ENCODE measurements at regions of chr2 and their contacts with region 1.

Region 1: DNA sequence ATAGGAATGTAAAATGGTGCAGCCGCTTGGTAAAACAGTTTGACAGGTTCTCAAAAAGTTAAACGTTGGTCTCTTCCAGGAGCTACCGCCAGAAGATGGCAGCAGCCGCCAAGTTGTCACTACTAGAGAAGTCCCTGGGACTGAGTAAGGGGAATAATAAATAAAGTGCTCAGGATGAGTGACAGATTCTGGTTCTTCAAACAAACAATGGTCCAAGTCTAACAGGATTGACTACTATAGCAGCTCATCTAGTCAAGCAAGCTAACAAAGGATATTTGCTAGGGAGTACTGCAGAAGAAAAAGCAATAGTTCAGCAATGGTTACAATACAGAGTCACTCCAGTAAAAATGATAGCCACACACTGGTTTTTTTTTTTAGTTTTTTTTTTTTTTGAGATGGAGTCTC is 3.8 kb upstream of the ANAPC1 start:
- DNase-seq: peak; percentile 71
- H3K4me3 ChIP-seq: no peak overlapping the region
- H3K27ac ChIP-seq: no peak overlapping the region
- H3K4me1 ChIP-seq: peaks cover 22% of the 10 kb centered on the region
- H3K27me3 ChIP-seq: no peaks in the 10 kb centered on the region
- CTCF ChIP-seq: peak; percentile 84

Region 2: DNA sequence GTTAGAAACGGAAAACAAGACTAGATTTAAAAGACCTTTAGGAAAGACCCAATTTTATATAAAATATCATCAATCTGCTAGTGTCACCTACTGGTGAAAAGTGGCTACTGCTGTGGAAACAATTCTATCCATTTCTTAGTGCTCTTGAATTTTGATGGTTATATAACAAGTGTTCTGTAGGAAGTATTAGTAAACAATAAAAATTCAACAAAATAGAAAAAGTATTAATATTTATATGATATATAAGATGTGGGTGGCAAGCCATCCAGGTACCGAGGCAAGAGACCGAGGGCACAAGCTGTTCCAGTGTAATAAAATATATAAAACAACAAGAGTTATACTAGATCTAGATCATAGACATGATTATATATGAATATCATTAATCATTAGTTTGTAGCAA is 161.1 kb after region 1 on chr2:
- intact Hi-C with region 1: loop called (anchors 1 kb)
- DNase-seq: no peak
- H3K4me3 ChIP-seq: no peak overlapping the region
- H3K27ac ChIP-seq: peak overlapping the region; percentile 33
- H3K4me1 ChIP-seq: peaks cover 27% of the 10 kb centered on the region
- H3K27me3 ChIP-seq: no peaks in the 10 kb centered on the region
- CTCF ChIP-seq: peak; percentile 85

Measured in left ventricle myocardium inferior (tissue), 1 donor.